ENCODE measurements at regions of chr15 and their contacts with region 1.

Region 1: GRCh38 chr15:78241007-78241406 is 6.6 kb upstream of the ACSBG1 start:
- DNase-seq: peak; percentile 94
- H3K4me3 ChIP-seq: no peak overlapping the region
- H3K27ac ChIP-seq: no peak overlapping the region
- H3K4me1 ChIP-seq: no peaks in the 10 kb centered on the region
- H3K27me3 ChIP-seq: no peaks in the 10 kb centered on the region
- CTCF ChIP-seq: peak; percentile 85

Region 2: GRCh38 chr15:77966540-77967290 is 274.3 kb before region 1 on chr15:
- intact Hi-C with region 1: loop called (anchors 10 kb)
- DNase-seq: peak; percentile 50
- H3K4me3 ChIP-seq: no peak overlapping the region
- H3K27ac ChIP-seq: no peak overlapping the region
- H3K4me1 ChIP-seq: no peaks in the 10 kb centered on the region
- H3K27me3 ChIP-seq: no peaks in the 10 kb centered on the region
- CTCF ChIP-seq: peak; percentile 86

Region 3: DNA sequence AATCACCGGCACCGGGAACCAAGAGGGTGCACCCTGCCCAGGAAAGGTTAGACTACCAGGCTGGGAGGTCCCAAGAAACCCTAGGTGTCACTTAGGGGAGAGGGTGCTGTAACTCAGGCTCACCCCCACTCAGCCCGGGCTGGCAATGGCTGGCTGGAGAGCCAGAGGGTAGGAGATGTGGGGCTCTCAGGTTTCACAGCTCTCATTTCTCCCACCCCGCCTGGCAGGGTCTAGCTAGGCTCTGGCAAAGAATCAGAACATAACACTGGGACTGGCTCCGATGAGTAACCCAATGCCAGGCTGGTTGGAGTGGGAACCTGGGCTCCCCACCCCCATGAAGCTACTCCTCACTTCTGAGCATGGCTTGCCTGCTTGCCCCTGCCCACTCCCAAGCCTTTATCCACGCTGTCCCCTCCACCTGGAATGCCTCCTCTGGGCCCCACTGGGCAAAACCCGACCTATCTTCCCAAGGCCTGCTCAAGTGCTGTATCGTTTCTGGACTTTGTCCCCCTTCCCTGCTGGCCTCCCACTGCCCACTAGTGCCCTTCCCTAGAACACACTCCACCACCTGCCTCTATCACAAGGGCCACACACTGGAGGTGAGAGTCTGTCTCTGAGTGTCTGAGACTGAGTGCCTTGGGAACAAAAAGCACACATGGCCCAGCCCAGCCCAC is 111.8 kb before region 1 on chr15:
- intact Hi-C with region 1: loop called (anchors 5 kb)
- DNase-seq: no peak
- H3K4me3 ChIP-seq: no peak overlapping the region
- H3K27ac ChIP-seq: no peak overlapping the region
- H3K4me1 ChIP-seq: no peaks in the 10 kb centered on the region
- H3K27me3 ChIP-seq: no peaks in the 10 kb centered on the region
- CTCF ChIP-seq: no peak

Region 4: GRCh38 chr15:78177447-78177873 is 63.5 kb before region 1 on chr15:
- intact Hi-C with region 1: loop called (anchors 2 kb)
- DNase-seq: peak; percentile 56
- H3K4me3 ChIP-seq: no peak overlapping the region
- H3K27ac ChIP-seq: no peak overlapping the region
- H3K4me1 ChIP-seq: no peaks in the 10 kb centered on the region
- H3K27me3 ChIP-seq: no peaks in the 10 kb centered on the region
- CTCF ChIP-seq: peak; percentile 43

Region 5: DNA sequence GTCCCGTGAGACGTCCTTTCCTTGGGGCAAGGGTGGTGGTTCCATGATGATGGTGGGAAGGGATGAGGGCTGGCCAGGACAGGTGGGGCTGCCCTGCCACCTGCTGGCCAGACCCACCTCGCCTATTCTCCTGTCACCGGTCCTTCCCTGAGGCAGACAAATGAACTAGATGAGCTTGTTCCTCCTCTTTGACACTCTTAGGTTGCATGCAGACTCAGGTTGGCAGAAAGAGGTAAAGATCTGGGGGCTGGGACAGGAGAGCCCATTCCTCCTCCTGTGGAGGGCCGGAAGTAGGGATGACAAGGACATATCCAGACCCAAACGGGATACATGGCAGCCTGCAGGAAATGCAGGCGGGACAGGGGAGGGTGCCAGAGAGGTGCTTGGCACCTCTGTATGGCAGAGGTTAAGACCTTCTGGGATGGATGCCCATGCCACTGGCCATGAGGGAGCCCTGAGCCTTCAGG is 45.2 kb before region 1 on chr15:
- intact Hi-C with region 1: loop called (anchors 5 kb)
- DNase-seq: peak; percentile 38
- H3K4me3 ChIP-seq: no peak overlapping the region
- H3K27ac ChIP-seq: no peak overlapping the region
- H3K4me1 ChIP-seq: no peaks in the 10 kb centered on the region
- H3K27me3 ChIP-seq: no peaks in the 10 kb centered on the region
- CTCF ChIP-seq: peak; percentile 74